Caco-2 (cell line): ENCODE measurements at regions of chr2 and their contacts with region 1.

Region 1: DNA sequence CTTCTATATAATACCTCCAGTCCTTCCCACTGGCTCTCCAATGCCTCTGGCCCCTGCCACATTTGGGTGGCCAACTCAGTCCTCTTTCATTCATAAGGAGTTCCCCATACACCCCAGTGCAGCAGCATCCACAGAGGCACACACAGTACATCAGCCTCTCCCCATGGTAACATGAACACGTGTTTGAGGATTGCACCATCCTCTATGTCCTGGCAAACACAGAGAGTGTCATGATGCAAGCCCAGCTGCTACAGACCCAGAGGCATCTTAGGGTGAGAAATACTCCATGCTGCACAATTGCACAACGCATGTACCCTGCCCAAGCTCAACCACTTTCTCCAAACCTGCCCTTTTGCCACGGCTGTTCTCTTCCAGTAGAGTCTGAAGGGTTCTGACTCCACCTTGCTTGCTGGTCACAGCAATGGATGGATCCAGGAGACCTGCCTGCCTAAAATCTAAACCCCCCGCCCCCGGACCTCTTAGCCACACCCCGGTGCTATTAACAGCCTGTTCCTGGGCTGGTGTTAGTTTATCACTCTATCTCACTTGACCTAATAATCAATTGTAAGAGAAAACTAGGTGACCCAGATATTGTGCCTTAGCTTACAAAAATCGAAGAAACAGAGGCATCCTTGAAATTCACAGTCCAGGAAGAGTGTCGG is 11.4 kb downstream of the IGFBP5 start:
- DNase-seq: peak in 1 of 2 experiments; percentile 38
- H3K4me3 ChIP-seq: no peak overlapping the region
- H3K4me3 Mint-ChIP-seq: no peak overlapping the region
- H3K27ac Mint-ChIP-seq: peak overlapping the region; percentile 49
- H3K4me1 ChIP-seq: no peaks in the 10 kb centered on the region
- H3K4me1 Mint-ChIP-seq: no peaks in the 10 kb centered on the region
- H3K27me3 ChIP-seq: no peaks in the 10 kb centered on the region
- H3K27me3 Mint-ChIP-seq: peaks cover 19% of the 10 kb centered on the region
- CTCF ChIP-seq: no peak

Region 2: DNA sequence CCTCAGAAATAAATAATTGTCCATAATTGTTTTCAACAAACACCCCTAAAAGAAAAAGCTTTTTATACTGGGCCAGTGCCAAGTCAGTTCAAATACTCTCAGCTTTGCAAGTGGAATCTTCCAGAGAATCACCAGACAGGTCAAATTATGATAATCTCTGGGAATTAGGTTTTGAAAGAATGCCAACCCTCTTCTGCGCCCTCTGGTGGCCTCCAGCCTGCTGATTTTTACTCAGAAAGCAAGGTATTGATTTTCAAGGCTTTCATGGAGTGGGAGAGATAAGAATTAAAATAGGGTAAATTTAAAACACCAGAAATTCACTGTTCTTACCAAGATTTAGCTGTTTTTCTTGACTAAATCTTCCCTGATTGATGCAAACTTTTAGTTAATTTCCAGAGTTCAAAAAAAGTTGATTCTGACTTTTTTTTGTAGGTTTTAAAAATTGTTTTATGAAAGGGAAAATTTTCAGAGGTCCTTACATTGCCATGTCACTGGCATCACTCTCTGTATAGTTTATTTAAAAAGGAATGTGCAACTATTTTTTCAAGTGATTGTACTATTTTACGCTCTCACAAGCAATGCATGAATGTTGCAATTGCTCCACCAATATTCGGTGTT is 458.8 kb after region 1 on chr2:
- CTCF ChIA-PET with region 1: no interaction called
- POLR2A ChIA-PET with region 1: no interaction called
- intact Hi-C with region 1: loop called (anchors 2 kb)
- DNase-seq: peak; percentile 51 to 69
- H3K4me3 ChIP-seq: no peak overlapping the region
- H3K4me3 Mint-ChIP-seq: no peak overlapping the region
- H3K27ac Mint-ChIP-seq: no peak overlapping the region
- H3K4me1 ChIP-seq: no peaks in the 10 kb centered on the region
- H3K4me1 Mint-ChIP-seq: no peaks in the 10 kb centered on the region
- H3K27me3 ChIP-seq: no peaks in the 10 kb centered on the region
- H3K27me3 Mint-ChIP-seq: peaks cover 7% of the 10 kb centered on the region
- CTCF ChIP-seq: peak; percentile 67 to 86

Region 3: GRCh38 chr2:217756375-217757107 is 1072.6 kb after region 1 on chr2:
- CTCF ChIA-PET with region 1: no interaction called
- POLR2A ChIA-PET with region 1: no interaction called
- intact Hi-C with region 1: loop called (anchors 5 kb)
- DNase-seq: peak in 1 of 2 experiments; percentile 67
- H3K4me3 ChIP-seq: no peak overlapping the region
- H3K4me3 Mint-ChIP-seq: no peak overlapping the region
- H3K27ac Mint-ChIP-seq: no peak overlapping the region
- H3K4me1 ChIP-seq: no peaks in the 10 kb centered on the region
- H3K4me1 Mint-ChIP-seq: no peaks in the 10 kb centered on the region
- H3K27me3 ChIP-seq: 0 out of 2 replicates have a peak, but pooled peaks cover 2% of the 10 kb centered on the region
- H3K27me3 Mint-ChIP-seq: peaks cover 16% of the 10 kb centered on the region
- CTCF ChIP-seq: peak; percentile 62 to 76